ENCODE measurements at regions of chr14 and their contacts with region 1.

Region 1: GRCh38 chr14:89416002-89416995 is 734 bp downstream of the FOXN3 start:
- DNase-seq: peak; percentile 98
- ATAC-seq: peak; percentile 80
- H3K4me3 Mint-ChIP-seq: peak overlapping the region; percentile 84
- H3K27ac Mint-ChIP-seq: peak overlapping the region; percentile 85
- H3K4me1 Mint-ChIP-seq: peaks cover 51% of the 10 kb centered on the region
- H3K27me3 Mint-ChIP-seq: no peaks in the 10 kb centered on the region

Region 2: DNA sequence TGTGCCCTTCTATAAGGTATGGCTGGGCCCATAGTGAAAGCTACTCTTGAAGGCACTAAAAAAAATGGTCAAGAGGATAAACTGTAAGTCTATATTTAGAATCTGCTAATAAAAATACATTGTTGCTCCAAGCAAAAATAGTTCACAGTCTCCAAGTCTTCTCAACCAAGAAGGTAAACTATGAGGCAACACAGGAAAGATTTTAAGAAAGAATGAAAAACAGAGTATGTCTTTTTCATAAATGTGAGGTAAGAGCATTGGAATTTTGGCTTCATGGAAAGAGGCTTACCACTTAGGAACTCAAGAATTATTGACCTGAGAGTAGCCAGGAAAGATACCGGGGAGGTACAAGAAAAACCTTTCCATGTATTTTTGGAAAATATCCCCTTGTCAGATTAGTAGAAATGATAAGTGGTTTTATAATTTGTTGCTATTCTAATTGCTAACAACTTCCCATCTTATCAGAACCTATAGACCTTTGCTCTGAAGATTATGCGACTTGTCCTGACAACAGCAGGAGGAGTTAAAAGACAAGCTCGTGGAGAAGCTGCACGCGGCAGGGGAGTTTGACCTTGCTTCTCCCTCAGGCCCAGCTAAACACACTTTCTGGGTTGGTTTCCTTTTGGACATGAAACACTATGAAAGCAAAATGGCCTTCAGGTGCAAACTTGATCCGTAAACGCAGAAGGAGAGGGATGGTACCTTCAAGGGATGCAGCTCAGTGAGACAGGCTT is 237.3 kb before region 1 on chr14:
- CTCF ChIA-PET with region 1: no interaction called
- POLR2A ChIA-PET with region 1: no interaction called
- intact Hi-C with region 1: loop called (anchors 1 to 5 kb)
- DNase-seq: no peak
- ATAC-seq: no peak
- H3K4me3 Mint-ChIP-seq: no peak overlapping the region
- H3K27ac Mint-ChIP-seq: peak overlapping the region; percentile 20
- H3K4me1 Mint-ChIP-seq: peaks cover 10% of the 10 kb centered on the region
- H3K27me3 Mint-ChIP-seq: no peaks in the 10 kb centered on the region

Region 3: GRCh38 chr14:89365061-89365801 is 51.1 kb before region 1 on chr14:
- CTCF ChIA-PET with region 1: interaction called, 3 read pairs
- POLR2A ChIA-PET with region 1: no interaction called
- intact Hi-C with region 1: loop called (anchors 1 to 2 kb)
- DNase-seq: peak; percentile 72
- ATAC-seq: peak; percentile 92
- H3K4me3 Mint-ChIP-seq: peak overlapping the region; percentile 70
- H3K27ac Mint-ChIP-seq: peak overlapping the region; percentile 97
- H3K4me1 Mint-ChIP-seq: peaks cover 62% of the 10 kb centered on the region
- H3K27me3 Mint-ChIP-seq: no peaks in the 10 kb centered on the region

Region 4: GRCh38 chr14:89701211-89702043 is 285.1 kb after region 1 on chr14:
- CTCF ChIA-PET with region 1: interaction called, 3 read pairs
- POLR2A ChIA-PET with region 1: no interaction called
- intact Hi-C with region 1: loop called in 1 of 2 experiments (anchors 5 kb)
- DNase-seq: peak; percentile 92
- ATAC-seq: peak; percentile 81
- H3K4me3 Mint-ChIP-seq: peak overlapping the region; percentile 65
- H3K27ac Mint-ChIP-seq: peak overlapping the region; percentile 83
- H3K4me1 Mint-ChIP-seq: peaks cover 49% of the 10 kb centered on the region
- H3K27me3 Mint-ChIP-seq: no peaks in the 10 kb centered on the region

Region 5: DNA sequence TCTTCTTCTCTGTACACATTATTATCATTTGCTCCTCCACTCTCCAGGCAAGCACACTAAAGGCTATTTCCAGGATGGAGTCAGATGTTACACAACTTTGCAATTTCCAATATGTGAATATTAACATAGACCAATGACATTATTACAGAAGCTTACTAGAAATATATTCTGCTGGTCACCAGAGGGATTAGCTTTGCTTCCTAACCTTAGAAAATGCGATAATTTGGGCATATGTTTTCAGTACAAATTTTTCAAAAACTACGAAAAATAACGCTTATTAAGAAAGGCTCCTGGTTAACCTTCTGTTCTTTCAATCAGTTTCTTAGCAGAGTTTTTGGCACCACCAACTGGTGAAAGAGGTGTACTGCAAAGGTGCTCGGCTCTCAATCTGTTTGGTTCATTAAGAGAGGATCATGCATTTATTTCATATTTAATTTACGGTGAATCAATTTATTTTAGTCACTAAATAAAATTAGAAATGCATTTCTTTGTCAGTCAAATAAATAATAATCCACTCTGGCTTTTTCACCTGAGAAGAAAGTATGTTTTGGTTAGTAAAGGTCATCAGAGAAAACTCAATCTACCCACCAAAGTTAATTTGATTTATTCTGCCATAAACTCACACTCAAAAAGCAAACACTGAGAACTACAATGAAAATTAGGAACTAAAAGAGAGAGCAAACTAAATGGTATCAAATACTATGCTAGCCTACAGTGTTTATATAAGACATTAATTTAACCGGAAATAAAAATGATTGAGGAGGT is 499.0 kb after region 1 on chr14:
- CTCF ChIA-PET with region 1: no interaction called
- POLR2A ChIA-PET with region 1: no interaction called
- intact Hi-C with region 1: loop called (anchors 5 to 10 kb)
- DNase-seq: peak; percentile 73
- ATAC-seq: no peak
- H3K4me3 Mint-ChIP-seq: no peak overlapping the region
- H3K27ac Mint-ChIP-seq: no peak overlapping the region
- H3K4me1 Mint-ChIP-seq: peaks cover 3% of the 10 kb centered on the region
- H3K27me3 Mint-ChIP-seq: peaks cover 3% of the 10 kb centered on the region

Region 6: GRCh38 chr14:90109646-90110257 is 693.5 kb after region 1 on chr14:
- CTCF ChIA-PET with region 1: no interaction called
- POLR2A ChIA-PET with region 1: no interaction called
- intact Hi-C with region 1: no loop called
- DNase-seq: peak; percentile 17
- ATAC-seq: no peak
- H3K4me3 Mint-ChIP-seq: no peak overlapping the region
- H3K27ac Mint-ChIP-seq: no peak overlapping the region
- H3K4me1 Mint-ChIP-seq: no peaks in the 10 kb centered on the region
- H3K27me3 Mint-ChIP-seq: peaks cover 11% of the 10 kb centered on the region

Measured in activated CD4-positive, alpha-beta T cell treated with anti-CD3 and anti-CD28 coated beads for 36 hours (primary cell).